ENCODE measurements at regions of chr1 and their contacts with region 1.

Region 1: DNA sequence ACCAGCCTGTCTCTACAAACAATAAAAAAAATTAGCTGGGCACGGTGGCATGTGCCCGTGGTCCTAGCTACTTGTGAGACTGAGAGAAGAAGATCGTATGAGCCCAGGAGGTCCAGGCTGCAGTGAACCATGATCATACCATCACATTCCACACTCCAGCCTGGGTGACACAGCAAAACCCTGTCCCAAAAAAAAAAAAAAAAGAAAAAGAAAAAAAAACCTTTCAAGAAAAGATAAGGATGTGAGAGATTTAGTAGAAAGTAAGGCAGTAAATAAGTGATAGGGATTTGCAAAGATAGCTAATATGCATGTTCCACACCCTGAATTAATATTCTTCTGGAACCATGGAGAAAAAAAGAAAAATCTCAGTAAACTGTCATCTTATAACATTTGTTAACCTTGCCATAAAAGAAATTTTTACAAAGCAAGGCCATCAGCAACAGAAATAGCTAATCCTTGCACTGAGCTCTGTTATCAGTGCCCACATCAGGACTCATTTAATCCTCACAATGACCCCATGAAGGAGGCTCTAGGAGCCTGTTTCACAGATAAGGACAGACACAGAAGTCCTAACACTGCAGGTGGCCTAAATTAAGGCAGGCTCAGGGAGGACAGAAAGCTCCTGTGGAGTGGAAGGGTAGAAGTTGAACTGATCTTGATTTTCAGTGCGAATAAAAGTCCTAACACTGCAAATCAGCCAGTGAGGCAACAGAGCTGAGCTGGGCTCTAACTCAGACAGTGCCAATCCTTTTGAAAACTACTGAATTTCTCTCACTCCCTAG is 7.6 kb downstream of the GNB1 start:
- DNase-seq: no peak
- ATAC-seq: peak; percentile 40
- H3K4me3 ChIP-seq: no peak overlapping the region
- H3K27ac ChIP-seq: no peak overlapping the region
- H3K4me1 ChIP-seq: peaks cover 8% of the 10 kb centered on the region
- H3K27me3 ChIP-seq: no peaks in the 10 kb centered on the region
- CTCF ChIP-seq: no peak
- POLR2A ChIP-seq: no peak
- RAD21 ChIP-seq: no peak

Region 2: DNA sequence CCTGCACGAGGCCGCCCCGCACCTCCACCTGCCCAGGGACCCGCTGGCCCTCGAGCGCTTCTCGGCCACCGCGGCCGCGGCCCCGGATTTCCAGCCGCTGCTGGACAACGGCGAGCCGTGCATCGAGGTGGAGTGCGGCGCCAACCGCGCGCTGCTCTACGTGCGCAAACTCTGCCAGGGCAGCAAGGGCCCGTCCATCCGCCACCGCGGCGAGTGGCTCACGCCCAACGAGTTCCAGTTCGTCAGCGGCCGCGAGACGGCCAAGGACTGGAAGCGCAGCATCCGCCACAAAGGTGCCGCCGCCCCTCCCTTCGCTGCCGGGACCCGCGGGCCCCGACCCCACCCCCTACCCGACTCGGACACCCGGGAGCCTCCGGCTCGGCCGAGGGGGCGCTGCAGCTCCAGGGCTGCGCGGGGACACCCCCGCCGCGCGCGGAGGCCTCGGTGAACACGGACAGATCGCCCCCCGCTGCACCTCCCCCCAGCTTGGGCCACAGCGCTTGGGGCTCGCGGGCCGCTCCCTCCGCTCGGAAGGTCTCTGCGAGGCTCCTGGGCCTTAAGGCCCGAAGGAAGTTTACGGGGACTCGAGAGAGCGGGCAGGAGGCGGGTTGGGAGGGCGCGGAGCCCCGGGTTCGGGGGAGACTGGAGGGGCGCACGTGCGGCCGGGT is 958.5 kb before region 1 on chr1:
- CTCF ChIA-PET with region 1: no interaction called
- POLR2A ChIA-PET with region 1: no interaction called
- dilution Hi-C with region 1: no loop called
- in situ Hi-C with region 1: no loop called
- intact Hi-C with region 1: no loop called
- DNase-seq: peak; percentile 36
- ATAC-seq: peak; percentile 9
- H3K4me3 ChIP-seq: peak overlapping the region; percentile 59
- H3K27ac ChIP-seq: peak overlapping the region; percentile 23
- H3K4me1 ChIP-seq: peaks cover 15% of the 10 kb centered on the region
- H3K27me3 ChIP-seq: no peaks in the 10 kb centered on the region
- CTCF ChIP-seq: peak; percentile 19; the same call in 1 of the 2 replicates
- POLR2A ChIP-seq: peak; percentile 22
- RAD21 ChIP-seq: no peak

Region 3: DNA sequence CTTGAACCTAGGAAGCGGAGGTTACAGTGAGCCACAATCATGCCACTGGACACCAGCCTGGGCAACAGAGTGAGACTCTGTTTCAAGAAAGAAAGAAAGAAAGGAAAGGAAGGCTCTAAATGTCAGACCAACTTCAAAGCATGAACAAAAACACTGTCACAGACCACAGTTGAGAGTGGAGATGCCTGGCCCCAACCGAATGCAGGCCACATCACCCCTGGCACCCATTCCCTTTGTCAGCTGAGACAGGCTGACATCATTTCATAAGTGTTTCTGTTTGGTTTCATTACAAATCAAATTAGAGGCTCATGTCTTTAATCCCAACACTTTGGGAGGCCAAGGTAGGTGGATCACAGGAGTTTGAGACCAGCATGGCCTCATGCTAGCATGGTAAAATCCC is 76.4 kb before region 1 on chr1:
- CTCF ChIA-PET with region 1: no interaction called
- POLR2A ChIA-PET with region 1: no interaction called
- dilution Hi-C with region 1: no loop called
- in situ Hi-C with region 1: no loop called
- intact Hi-C with region 1: no loop called
- DNase-seq: peak; percentile 37
- ATAC-seq: peak; percentile 27; the same call in 1 of the 2 replicates
- H3K4me3 ChIP-seq: no peak overlapping the region
- H3K27ac ChIP-seq: no peak overlapping the region
- H3K4me1 ChIP-seq: no peaks in the 10 kb centered on the region
- H3K27me3 ChIP-seq: no peaks in the 10 kb centered on the region
- CTCF ChIP-seq: no peak
- POLR2A ChIP-seq: no peak
- RAD21 ChIP-seq: no peak

Region 4: DNA sequence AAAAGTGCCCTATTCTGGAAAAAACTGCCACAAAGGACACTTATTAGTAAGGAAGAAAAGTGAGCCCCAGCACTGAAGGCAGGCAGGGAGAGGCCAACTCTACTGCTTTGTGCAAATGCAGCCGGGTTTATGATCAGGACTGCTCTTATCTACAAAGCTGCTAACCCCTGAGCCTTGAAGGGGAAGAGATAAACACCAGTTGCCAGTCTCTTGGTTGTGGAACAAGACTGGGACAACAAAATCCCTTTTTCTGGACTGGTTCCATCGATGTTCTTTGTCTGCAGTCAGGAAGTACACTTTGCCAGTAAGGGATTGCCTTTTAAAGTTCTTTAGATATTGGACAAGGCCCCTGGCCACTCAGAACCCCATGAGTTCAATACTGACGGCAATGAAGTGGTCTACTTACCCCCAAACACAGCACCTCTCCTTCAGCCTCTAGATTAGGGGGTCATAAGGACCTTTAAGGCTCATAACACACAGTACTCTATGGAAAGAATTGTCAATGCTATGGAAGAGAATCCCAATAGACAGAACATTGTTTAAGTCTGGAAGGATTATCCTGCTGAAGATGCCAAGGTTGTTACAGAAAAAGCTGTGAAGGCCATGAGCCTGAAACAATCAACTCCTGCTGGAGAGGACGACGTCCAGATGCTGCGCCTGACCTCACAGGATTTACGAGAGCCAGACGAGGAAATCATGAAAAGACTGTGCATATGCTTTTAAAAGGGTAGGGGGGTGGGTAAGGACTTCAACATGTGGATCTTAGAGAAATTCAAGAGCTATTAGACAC is 36.0 kb before region 1 on chr1:
- CTCF ChIA-PET with region 1: no interaction called
- POLR2A ChIA-PET with region 1: no interaction called
- dilution Hi-C with region 1: no loop called
- in situ Hi-C with region 1: no loop called
- intact Hi-C with region 1: loop called (anchors 5 kb)
- DNase-seq: no peak
- ATAC-seq: peak; percentile 38
- H3K4me3 ChIP-seq: no peak overlapping the region
- H3K27ac ChIP-seq: peak overlapping the region; percentile 4; the same call in 1 of the 2 replicates
- H3K4me1 ChIP-seq: no peaks in the 10 kb centered on the region
- H3K27me3 ChIP-seq: no peaks in the 10 kb centered on the region
- CTCF ChIP-seq: no peak
- POLR2A ChIP-seq: no peak
- RAD21 ChIP-seq: no peak

Region 5: DNA sequence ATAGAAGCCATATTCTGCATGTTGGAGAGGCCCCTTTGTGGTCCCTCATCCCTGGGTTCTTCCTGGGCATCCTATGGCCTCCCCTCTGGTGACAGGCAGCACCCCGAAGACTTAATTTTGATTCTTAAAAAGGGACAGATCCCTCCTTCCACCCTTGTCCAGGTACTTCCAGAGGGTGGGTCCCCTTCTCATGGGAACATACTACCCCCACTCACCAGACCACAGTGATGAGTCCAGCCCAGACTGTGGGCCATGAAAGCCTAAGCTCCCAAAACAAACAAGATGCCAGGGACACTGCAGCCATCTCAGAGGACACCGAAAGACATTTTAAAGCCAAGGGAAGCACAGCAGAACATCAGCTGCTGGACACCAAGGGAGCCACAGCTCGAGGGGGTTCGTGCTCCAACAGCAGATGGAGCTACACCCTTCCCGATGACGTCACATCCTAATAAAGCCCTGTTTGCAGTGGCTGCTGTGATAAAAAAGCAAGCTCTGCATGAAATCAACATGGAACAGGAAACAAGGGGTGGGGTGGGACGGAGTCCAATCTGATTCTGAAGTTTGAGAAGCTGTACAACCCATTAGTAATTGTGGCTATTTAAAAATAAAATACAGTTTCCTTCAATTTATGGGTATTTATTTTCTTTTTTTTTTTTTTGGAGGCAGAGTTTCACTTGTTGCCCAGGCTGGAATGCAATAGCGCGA is 24.7 kb before region 1 on chr1:
- CTCF ChIA-PET with region 1: interaction called, 3 read pairs
- POLR2A ChIA-PET with region 1: no interaction called
- dilution Hi-C with region 1: no loop called
- in situ Hi-C with region 1: no loop called
- intact Hi-C with region 1: loop called (anchors 2 kb)
- DNase-seq: peak; percentile 81
- ATAC-seq: peak; percentile 50
- H3K4me3 ChIP-seq: no peak overlapping the region
- H3K27ac ChIP-seq: peak overlapping the region; percentile 31; the same call in 1 of the 2 replicates
- H3K4me1 ChIP-seq: peaks cover 19% of the 10 kb centered on the region
- H3K27me3 ChIP-seq: no peaks in the 10 kb centered on the region
- CTCF ChIP-seq: peak; percentile 45
- POLR2A ChIP-seq: no peak
- RAD21 ChIP-seq: peak; percentile 28; the same call in 1 of the 2 replicates

Region 6: GRCh38 chr1:1943834-1944570 is 60.7 kb after region 1 on chr1:
- CTCF ChIA-PET with region 1: no interaction called
- POLR2A ChIA-PET with region 1: no interaction called
- dilution Hi-C with region 1: no loop called
- in situ Hi-C with region 1: no loop called
- intact Hi-C with region 1: no loop called
- DNase-seq: no peak
- ATAC-seq: peak; percentile 99
- H3K4me3 ChIP-seq: no peak overlapping the region
- H3K27ac ChIP-seq: no peak overlapping the region
- H3K4me1 ChIP-seq: no peaks in the 10 kb centered on the region
- H3K27me3 ChIP-seq: peaks cover 34% of the 10 kb centered on the region
- CTCF ChIP-seq: peak; percentile 62
- POLR2A ChIP-seq: no peak
- RAD21 ChIP-seq: peak; percentile 56